B cell (primary cell): ENCODE measurements at regions of chr1 and their contacts with region 1.

Region 1: DNA sequence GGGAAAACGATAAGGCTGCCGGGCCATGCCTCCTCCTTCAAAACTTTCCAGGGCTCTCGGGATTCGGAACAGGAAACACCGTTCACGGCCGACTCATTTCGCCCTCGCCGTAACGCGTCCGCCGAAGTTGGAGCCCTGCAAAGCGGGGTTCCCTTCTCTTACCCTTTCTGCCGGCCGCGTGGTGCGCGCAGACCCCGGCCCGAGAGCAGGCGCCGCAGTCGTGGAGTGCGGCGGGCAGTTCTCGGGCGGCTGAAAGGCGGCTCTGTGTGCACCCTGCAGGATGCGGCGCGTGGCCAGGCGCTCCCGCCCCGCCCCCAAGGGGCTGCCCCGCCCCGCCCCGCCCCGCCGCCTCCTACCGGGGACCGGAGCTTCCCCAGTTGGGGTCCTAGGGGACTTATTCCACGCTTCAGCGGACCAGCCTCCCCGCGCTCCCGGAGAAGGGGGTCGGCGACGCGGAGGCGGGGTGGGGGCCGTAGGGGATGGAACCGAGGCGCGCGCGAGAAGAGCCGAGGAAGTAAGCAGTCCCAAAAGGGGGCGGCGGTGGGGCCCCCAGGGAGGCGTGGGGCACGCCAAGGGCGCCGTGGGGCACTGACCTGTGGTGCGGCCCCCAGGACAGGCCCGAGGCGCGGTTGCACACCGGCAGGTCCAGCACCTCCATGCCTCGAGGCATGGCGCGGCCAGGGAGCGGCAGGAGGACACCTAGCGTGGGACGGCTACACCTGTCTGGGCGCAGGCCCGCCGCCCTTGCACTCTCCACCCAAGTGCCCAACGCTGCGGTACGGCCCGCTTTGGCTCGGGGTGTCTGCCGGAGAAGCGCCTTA is at the start of gene MCOLN2:
- DNase-seq: peak; percentile 72
- ATAC-seq: peak; percentile 71
- H3K4me3 ChIP-seq: peak within 1 kb of the TSS; percentile 41 to 78 (median 63)
- H3K4me3 Mint-ChIP-seq: peak within 1 kb of the TSS; percentile 85
- H3K27ac ChIP-seq: peak within 1 kb of the TSS; percentile 50 to 59
- H3K27ac Mint-ChIP-seq: peak within 1 kb of the TSS; percentile 82
- H3K4me1 ChIP-seq: peaks cover 47 to 50% of the 10 kb centered on the region in 2 donors
- H3K4me1 Mint-ChIP-seq: peaks cover 61% of the 10 kb centered on the region
- H3K27me3 ChIP-seq: peaks cover 0 to 10% (median 2%) of the 10 kb centered on the region in 4 experiments
- H3K27me3 Mint-ChIP-seq: no peaks in the 10 kb centered on the region
- CTCF ChIP-seq: no peak
- total RNA-seq, gene MCOLN2: 25.8 and 35.3 TPM in 2 replicates

Region 2: DNA sequence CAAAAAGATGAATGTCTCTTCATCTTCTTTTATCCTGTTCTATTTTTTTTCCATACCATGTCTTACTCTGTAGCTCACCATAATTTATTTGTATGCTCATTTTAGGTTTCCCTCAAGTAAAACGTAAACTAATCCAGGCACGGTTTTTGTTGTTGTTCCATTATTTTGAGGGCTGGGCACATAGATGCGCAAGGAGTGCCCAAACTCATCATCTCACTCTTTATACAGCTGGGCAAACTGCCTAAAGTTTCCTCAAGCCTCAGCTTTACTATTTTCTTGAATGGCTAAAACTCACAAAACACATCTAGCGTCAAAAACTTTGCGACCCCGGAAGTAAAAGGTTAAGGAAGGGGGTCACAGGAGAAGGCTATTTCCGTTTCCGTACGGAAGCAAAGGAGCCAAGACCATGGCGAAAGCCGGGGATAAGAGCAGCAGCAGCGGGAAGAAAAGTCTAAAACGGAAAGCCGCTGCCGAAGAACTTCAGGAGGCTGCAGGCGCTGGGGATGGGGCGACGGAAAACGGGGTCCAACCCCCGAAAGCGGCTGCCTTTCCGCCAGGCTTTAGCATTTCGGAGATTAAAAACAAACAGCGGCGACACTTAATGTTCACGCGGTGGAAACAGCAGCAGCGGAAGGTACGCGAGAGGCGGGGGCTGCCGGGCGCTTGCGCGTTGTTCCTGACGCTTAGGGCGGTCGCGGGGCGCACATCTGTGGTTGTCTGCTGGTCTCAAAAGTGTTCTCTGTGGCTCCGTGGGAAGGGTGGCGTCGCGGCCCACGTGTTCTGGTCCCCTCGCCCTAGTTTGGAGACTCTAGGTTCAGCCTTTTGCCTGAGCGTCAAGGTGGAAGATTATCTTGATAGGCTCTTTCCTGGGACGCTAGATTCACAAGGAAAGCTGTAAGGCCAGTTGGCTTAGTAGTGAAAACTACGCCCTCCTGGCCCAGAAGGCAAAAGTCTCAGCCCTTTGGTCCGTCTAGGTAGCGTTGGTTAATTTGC is 517.9 kb before region 1 on chr1 and contains the start of gene RPF1:
- CTCF ChIA-PET with region 1: no interaction called
- POLR2A ChIA-PET with region 1: no interaction called
- intact Hi-C with region 1: loop called (anchors 10 kb)
- DNase-seq: peak; percentile 88
- ATAC-seq: peak; percentile 95
- H3K4me3 ChIP-seq: peak within 1 kb of the TSS; percentile 66 to 90 (median 88)
- H3K4me3 Mint-ChIP-seq: peak within 1 kb of the TSS; percentile 94
- H3K27ac ChIP-seq: peak within 1 kb of the TSS; percentile 78 to 81
- H3K27ac Mint-ChIP-seq: peak within 1 kb of the TSS; percentile 91
- H3K4me1 ChIP-seq: peaks cover 19 to 32% of the 10 kb centered on the region in 2 donors
- H3K4me1 Mint-ChIP-seq: peaks cover 40% of the 10 kb centered on the region
- H3K27me3 ChIP-seq: peaks cover 0 to 24% (median 14%) of the 10 kb centered on the region in 4 experiments
- H3K27me3 Mint-ChIP-seq: peaks cover 30% of the 10 kb centered on the region
- CTCF ChIP-seq: no peak
- total RNA-seq, gene RPF1: 38.8 and 40.2 TPM in 2 replicates

Region 3: DNA sequence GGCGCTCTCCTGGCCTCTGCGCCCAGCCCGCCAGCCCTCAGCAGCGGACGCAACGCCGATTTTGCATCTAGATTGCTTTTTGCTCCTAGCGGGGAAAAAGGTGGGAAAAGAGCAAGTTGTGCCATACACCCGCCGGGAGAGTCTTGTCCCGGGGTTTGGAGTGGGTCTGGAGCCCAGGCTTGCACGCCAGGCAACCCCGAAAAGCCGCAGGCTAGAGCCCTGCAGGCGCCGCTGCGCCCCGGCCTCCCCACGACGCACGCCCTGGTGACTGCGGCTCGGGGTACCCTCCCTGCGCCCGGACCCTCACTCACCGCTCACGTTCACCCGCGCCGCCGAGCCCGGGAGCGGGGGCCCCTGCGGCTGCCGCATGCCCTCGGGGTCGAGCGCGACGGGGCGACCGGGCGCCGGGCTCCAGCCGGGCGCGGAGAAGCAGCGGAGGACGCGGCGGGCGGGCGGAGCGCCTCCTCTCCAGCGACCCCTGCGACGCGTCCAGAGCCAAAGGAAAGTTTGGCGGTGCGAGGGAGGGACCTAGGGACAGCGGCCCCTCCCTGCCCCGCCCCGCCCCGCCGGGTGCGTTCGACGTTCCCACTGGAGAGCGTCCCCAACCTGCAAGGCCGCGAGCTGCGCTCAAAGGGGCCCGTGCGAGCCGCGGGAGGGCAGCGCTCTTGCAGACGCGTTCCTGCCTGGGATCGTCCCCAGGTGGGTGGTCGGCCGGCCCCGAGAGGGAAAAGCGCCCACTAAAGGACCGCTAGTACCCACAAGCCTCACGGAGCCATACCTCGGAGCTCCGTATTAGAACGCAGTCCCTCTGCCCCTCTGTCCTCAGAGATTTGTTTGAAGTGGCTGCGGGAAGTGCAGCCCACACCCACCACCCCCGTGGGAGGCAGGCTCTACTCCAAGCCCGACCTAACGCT is 104.1 kb before region 1 on chr1 and contains the start of gene LPAR3:
- CTCF ChIA-PET with region 1: no interaction called
- POLR2A ChIA-PET with region 1: no interaction called
- intact Hi-C with region 1: no loop called
- DNase-seq: no peak
- ATAC-seq: no peak
- H3K4me3 ChIP-seq: no peak within 1 kb of the TSS
- H3K4me3 Mint-ChIP-seq: peak within 1 kb of the TSS; percentile 27
- H3K27ac ChIP-seq: no peak within 1 kb of the TSS
- H3K27ac Mint-ChIP-seq: no peak within 1 kb of the TSS
- H3K4me1 ChIP-seq: peaks cover 9% of the 10 kb centered on the region in 2 donors
- H3K4me1 Mint-ChIP-seq: peaks cover 7% of the 10 kb centered on the region
- H3K27me3 ChIP-seq: peaks cover 0 to 25% (median 21%) of the 10 kb centered on the region in 4 experiments
- H3K27me3 Mint-ChIP-seq: peaks cover 47% of the 10 kb centered on the region
- CTCF ChIP-seq: no peak
- total RNA-seq, gene LPAR3: 0.36 TPM in 1 of 2 replicates, not detected in the other

Region 4: GRCh38 chr1:84973498-84974334 is 23.3 kb before region 1 on chr1:
- CTCF ChIA-PET with region 1: interaction called, 7 read pairs
- POLR2A ChIA-PET with region 1: no interaction called
- intact Hi-C with region 1: loop called (anchors 2 kb)
- DNase-seq: no peak
- ATAC-seq: peak; percentile 24
- H3K4me3 ChIP-seq: no peak overlapping the region
- H3K4me3 Mint-ChIP-seq: peak overlapping the region; percentile 27
- H3K27ac ChIP-seq: no peak overlapping the region
- H3K27ac Mint-ChIP-seq: peak overlapping the region; percentile 43
- H3K4me1 ChIP-seq: peaks cover 22 to 37% of the 10 kb centered on the region in 2 donors
- H3K4me1 Mint-ChIP-seq: peaks cover 59% of the 10 kb centered on the region
- H3K27me3 ChIP-seq: no peaks in the 10 kb centered on the region
- H3K27me3 Mint-ChIP-seq: no peaks in the 10 kb centered on the region
- CTCF ChIP-seq: no peak

Region 5: GRCh38 chr1:85048296-85049064 is 51.4 kb after region 1 on chr1 and contains the start of gene MCOLN3:
- CTCF ChIA-PET with region 1: interaction called, 3 read pairs
- POLR2A ChIA-PET with region 1: no interaction called
- intact Hi-C with region 1: loop called (anchors 5 kb)
- DNase-seq: peak; percentile 64
- ATAC-seq: peak; percentile 70
- H3K4me3 ChIP-seq: peak within 1 kb of the TSS in 4 of 5 experiments; percentile 39 to 69 (median 53)
- H3K4me3 Mint-ChIP-seq: peak within 1 kb of the TSS; percentile 87
- H3K27ac ChIP-seq: no peak within 1 kb of the TSS
- H3K27ac Mint-ChIP-seq: no peak within 1 kb of the TSS
- H3K4me1 ChIP-seq: peaks cover 14 to 19% of the 10 kb centered on the region in 2 donors
- H3K4me1 Mint-ChIP-seq: peaks cover 14% of the 10 kb centered on the region
- H3K27me3 ChIP-seq: peaks cover 0 to 36% (median 35%) of the 10 kb centered on the region in 4 experiments
- H3K27me3 Mint-ChIP-seq: peaks cover 51% of the 10 kb centered on the region
- CTCF ChIP-seq: no peak
- total RNA-seq, gene MCOLN3: 0.10 TPM in 1 of 2 replicates, not detected in the other

Region 6: GRCh38 chr1:85200870-85201339 is 203.8 kb after region 1 on chr1 and contains the start of gene SYDE2:
- CTCF ChIA-PET with region 1: no interaction called
- POLR2A ChIA-PET with region 1: no interaction called
- intact Hi-C with region 1: loop called (anchors 2 kb)
- DNase-seq: peak; percentile 86
- ATAC-seq: peak; percentile 83
- H3K4me3 ChIP-seq: peak within 1 kb of the TSS; percentile 46 to 73 (median 62)
- H3K4me3 Mint-ChIP-seq: peak within 1 kb of the TSS; percentile 98
- H3K27ac ChIP-seq: peak within 1 kb of the TSS in 1 of 2 donors; percentile 85
- H3K27ac Mint-ChIP-seq: peak within 1 kb of the TSS; percentile 93
- H3K4me1 ChIP-seq: peaks cover 16 to 26% of the 10 kb centered on the region in 2 donors
- H3K4me1 Mint-ChIP-seq: peaks cover 15% of the 10 kb centered on the region
- H3K27me3 ChIP-seq: peaks cover 0 to 35% (median 25%) of the 10 kb centered on the region in 4 experiments
- H3K27me3 Mint-ChIP-seq: peaks cover 42% of the 10 kb centered on the region
- CTCF ChIP-seq: no peak
- total RNA-seq, gene SYDE2: 0.89 and 1.0 TPM in 2 replicates